ENCODE measurements at regions of chr1 and their contacts with region 1.

Region 1: DNA sequence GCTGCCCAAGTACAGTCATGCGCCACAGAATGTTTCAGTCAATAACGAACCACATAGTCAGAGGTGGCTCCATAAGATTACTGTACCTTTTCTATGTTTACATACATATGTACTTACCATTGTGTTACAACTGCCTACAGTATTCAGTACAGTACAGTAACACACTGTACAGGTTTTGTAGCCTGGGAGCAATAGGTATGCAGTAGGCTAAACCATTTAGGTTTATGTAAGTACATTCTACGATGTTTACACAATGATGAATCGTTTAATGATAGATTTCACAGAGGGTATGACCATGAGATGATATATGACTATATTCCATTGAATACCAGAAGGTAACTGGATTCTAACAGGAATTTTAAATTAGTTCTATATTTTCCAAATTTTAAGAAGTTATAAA is 10.5 kb downstream of the YY1AP1 start:
- DNase-seq: no peak
- ATAC-seq: no peak
- H3K4me3 ChIP-seq: no peak overlapping the region
- H3K27ac ChIP-seq: no peak overlapping the region
- H3K4me1 ChIP-seq: no peaks in the 10 kb centered on the region
- H3K27me3 ChIP-seq: no peaks in the 10 kb centered on the region
- CTCF ChIP-seq: no peak

Region 2: GRCh38 chr1:155339515-155340097 is 338.4 kb before region 1 on chr1:
- intact Hi-C with region 1: loop called in 1 of 2 experiments (anchors 10 kb)
- DNase-seq: no peak
- ATAC-seq: peak in 2 of 4 donors; percentile 46 to 50
- H3K4me3 ChIP-seq: no peak overlapping the region
- H3K27ac ChIP-seq: no peak overlapping the region
- H3K4me1 ChIP-seq: no peaks in the 10 kb centered on the region
- H3K27me3 ChIP-seq: no peaks in the 10 kb centered on the region
- CTCF ChIP-seq: no peak

Region 3: GRCh38 chr1:155622191-155622590 is 55.8 kb before region 1 on chr1:
- intact Hi-C with region 1: no loop called
- DNase-seq: no peak
- ATAC-seq: no peak
- H3K4me3 ChIP-seq: no peak overlapping the region
- H3K27ac ChIP-seq: no peak overlapping the region
- H3K4me1 ChIP-seq: no peaks in the 10 kb centered on the region
- H3K27me3 ChIP-seq: no peaks in the 10 kb centered on the region
- CTCF ChIP-seq: no peak

Region 4: DNA sequence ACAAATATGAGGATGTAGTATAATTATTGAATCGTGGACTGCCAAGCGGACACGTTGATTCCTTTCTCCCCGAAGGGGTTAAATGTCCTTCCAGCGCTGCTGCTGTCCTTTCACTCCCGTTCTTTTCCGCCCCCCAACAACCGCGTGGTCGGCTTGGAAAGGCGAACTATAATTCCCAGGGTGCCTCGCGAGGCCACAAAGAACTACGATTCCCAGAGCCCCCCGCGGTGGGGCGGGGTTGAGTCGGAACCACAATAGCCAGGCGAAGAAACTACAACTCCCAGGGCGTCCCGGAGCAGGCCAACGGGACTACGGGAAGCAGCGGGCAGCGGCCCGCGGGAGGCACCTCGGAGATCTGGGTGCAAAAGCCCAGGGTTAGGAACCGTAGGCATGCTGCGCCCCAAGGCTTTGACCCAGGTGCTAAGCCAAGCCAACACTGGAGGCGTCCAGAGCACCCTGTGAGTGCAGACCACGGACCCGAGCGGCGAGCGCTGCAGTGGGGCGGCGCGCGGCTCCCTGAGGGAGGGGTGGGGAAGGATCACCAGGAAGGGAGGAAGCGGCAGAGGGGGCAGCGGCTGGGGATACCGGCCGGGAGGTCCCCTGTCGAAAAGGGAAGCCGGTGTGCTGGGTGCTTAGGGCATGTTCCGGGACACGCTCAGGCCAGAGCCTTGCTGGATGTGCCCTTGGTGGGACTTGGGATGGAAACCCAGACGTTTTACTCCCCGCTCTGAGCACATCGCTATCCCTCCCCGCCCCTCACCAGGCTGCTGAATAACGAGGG is 376.7 kb after region 1 on chr1 and contains the start of gene LAMTOR2:
- intact Hi-C with region 1: no loop called
- DNase-seq: peak; percentile 99
- ATAC-seq: peak; percentile 85 to 91 (median 90)
- H3K4me3 ChIP-seq: peak within 1 kb of the TSS; percentile 97
- H3K27ac ChIP-seq: peak within 1 kb of the TSS; percentile 96
- H3K4me1 ChIP-seq: peaks cover 28% of the 10 kb centered on the region
- H3K27me3 ChIP-seq: no peaks in the 10 kb centered on the region
- CTCF ChIP-seq: no peak
- total RNA-seq, gene LAMTOR2: 46.1 to 63.9 (median 51.2) TPM

Region 5: GRCh38 chr1:156096640-156097391 is 418.8 kb after region 1 on chr1:
- intact Hi-C with region 1: no loop called
- DNase-seq: peak; percentile 93 to 96
- ATAC-seq: peak; percentile 98 to 100 (median 98)
- H3K4me3 ChIP-seq: no peak overlapping the region
- H3K27ac ChIP-seq: peak overlapping the region; percentile 53
- H3K4me1 ChIP-seq: peaks cover 17% of the 10 kb centered on the region
- H3K27me3 ChIP-seq: no peaks in the 10 kb centered on the region
- CTCF ChIP-seq: peak; percentile 95